Cardiac septum (tissue), 1 donor: ENCODE measurements at regions of chr16 and their contacts with region 1.

Region 1: GRCh38 chr16:53503270-53503923 is 388 bp upstream of the AKTIP start:
- DNase-seq: peak; percentile 100

Region 2: DNA sequence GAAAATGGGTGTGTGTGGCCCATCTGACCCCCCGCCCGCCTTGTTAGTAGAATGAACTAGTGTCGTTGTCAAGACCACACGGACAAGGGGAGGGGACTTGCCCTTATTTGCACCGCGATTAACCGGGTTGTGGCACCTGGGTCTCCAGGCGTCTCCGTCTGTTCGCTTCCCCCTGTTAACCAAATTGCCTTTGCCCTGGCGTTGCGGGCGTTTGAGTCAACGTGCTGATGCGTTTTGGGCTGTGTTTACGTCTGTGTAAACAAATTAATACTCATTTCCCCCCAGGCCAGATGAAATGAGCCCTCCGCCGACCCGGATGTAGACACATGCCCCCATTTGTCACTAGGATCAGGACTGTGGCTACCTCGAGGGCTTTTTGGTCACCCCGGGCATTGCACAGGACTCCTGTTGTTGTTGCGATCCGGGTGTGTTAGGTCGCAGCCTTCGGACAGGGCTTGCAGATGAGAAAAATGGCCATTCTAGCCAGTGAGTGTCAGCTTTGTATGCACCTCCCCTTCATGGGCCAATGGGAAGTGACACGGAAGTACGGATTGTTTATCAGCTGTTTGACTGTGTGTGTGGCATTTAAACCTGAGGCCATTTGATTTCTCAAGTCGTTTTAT is 68.2 kb before region 1 on chr16:
- intact Hi-C with region 1: loop called (anchors 2 kb)
- DNase-seq: peak; percentile 87